PC-9 (cell line): ENCODE measurements at regions of chrX and their contacts with region 1.

Region 1: GRCh38 chrX:69991685-69992084 is 58.1 kb downstream of the AWAT2 start:
- DNase-seq: no peak
- H3K4me3 ChIP-seq: no peak overlapping the region
- H3K27ac ChIP-seq: no peak overlapping the region
- H3K4me1 ChIP-seq: no peaks in the 10 kb centered on the region
- H3K27me3 ChIP-seq: no peaks in the 10 kb centered on the region
- CTCF ChIP-seq: no peak

Region 2: DNA sequence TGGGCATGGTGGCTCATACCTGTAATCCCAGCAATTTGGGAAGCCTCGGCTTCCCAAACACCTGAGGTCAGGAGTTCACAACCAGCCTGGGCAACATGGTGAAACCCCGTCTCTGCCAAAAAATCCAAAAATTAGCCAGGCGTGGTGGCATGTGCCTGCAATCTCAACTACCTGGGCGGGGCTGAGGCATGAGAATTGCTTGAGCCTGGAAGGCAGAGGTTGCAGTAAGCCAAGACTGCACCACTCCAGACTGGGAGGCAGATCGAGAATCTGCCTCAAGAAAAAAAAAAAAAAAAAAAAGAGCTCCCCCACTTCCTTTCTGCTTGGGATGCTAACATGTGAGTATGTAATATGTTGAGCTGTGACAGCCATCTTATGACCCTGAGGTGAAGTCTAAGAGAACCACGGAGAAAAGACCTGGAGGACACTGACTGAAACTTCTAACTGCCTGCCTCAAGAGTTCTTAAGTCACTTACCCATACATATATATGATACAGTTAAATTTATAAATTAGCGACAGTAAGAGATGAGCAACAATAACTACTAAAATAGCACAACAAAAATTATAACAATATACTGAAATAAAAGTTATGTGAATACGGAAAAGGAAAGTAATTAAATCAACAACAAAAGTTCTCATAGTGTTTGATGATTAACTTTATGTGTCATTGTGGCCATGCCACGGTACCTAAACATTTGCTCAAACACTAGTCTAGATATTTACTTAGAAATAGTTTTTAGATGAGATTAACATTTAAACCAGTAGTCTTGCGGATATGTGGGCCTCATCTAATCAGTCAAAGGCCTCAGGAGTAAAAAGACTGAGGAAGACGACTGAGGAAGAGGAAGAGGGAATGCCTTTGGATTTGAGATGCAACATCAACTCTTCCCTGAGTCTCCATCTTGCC is 1736.7 kb before region 1 on chrX:
- CTCF ChIA-PET with region 1: interaction called, 10 read pairs
- POLR2A ChIA-PET with region 1: no interaction called
- intact Hi-C with region 1: no loop called
- DNase-seq: no peak
- H3K4me3 ChIP-seq: no peak overlapping the region
- H3K27ac ChIP-seq: no peak overlapping the region
- H3K4me1 ChIP-seq: no peaks in the 10 kb centered on the region
- H3K27me3 ChIP-seq: no peaks in the 10 kb centered on the region
- CTCF ChIP-seq: no peak